Naive thymus-derived CD4-positive, alpha-beta T cell (primary cell): ENCODE measurements at regions of chr6 and their contacts with region 1.

Region 1: DNA sequence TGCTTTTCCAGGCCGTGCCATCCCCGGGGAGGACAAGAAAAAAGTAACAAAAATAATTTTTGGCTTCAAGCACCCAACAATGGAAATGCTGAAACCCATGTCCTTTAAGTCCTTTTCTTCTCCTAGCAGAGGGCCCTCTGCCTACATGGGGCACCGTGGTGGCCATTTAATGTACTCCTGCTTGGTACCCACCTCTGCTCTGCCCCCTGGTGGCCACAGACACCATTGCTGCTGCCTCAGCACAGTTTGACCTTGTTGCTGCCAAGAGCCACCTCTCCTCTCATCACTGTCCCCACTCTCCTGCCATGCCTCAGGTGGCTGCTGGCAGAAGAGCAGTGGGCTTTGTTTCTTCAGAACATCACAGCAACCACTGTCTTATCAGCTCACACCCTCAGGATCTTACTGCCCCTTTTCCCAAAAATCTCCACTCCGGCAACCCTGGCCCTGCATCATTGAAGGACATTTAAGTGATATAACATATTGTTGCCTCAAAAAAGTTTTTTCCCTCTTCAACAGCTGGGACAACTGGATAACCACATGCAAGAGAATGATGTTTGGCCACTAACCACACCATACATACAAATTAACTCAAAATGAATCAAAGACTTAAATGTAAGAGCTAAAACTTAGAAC is 12.9 kb upstream of the ARMC2 start:
- DNase-seq: peak; percentile 65 to 82 (median 76)
- ATAC-seq: peak; percentile 98
- H3K4me3 ChIP-seq: no peak overlapping the region
- H3K4me3 Mint-ChIP-seq: no peak overlapping the region
- H3K27ac ChIP-seq: no peak overlapping the region
- H3K27ac Mint-ChIP-seq: peak overlapping the region in 6 of 9 donors; percentile 27 to 52 (median 48)
- H3K4me1 ChIP-seq: peaks cover 9 to 18% of the 10 kb centered on the region in 2 donors
- H3K4me1 Mint-ChIP-seq: peaks cover 14 to 30% (median 22%) of the 10 kb centered on the region in 7 donors
- H3K27me3 ChIP-seq: no peaks in the 10 kb centered on the region
- H3K27me3 Mint-ChIP-seq: peaks cover 0 to 44% (median 0%) of the 10 kb centered on the region in 5 donors

Region 2: DNA sequence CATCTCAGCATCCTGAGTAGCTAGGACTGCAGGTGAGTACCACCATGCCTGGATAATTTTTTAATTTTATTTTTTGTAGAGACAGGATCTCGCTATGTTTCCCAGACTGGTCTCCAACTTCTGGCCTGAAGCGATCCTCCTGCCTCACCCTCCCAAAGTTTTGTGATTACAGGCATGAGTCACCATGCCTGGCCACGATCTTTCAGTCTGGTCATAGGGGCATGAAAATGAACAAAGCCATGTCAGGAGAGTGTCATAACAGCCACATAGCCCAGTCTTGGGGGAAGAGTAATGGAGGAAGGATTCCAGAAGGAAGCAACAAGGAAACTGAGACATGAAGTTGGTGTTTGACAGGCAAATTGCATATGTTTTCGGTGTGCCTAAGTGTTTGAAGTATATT is 557.5 kb before region 1 on chr6:
- CTCF ChIA-PET with region 1: no interaction called
- POLR2A ChIA-PET with region 1: no interaction called
- intact Hi-C with region 1: no loop called
- DNase-seq: no peak
- ATAC-seq: no peak
- H3K4me3 ChIP-seq: no peak overlapping the region
- H3K4me3 Mint-ChIP-seq: no peak overlapping the region
- H3K27ac ChIP-seq: no peak overlapping the region
- H3K27ac Mint-ChIP-seq: no peak overlapping the region
- H3K4me1 ChIP-seq: no peaks in the 10 kb centered on the region
- H3K4me1 Mint-ChIP-seq: no peaks in the 10 kb centered on the region
- H3K27me3 ChIP-seq: no peaks in the 10 kb centered on the region
- H3K27me3 Mint-ChIP-seq: peaks cover 0 to 31% (median 4%) of the 10 kb centered on the region in 5 donors

Region 3: DNA sequence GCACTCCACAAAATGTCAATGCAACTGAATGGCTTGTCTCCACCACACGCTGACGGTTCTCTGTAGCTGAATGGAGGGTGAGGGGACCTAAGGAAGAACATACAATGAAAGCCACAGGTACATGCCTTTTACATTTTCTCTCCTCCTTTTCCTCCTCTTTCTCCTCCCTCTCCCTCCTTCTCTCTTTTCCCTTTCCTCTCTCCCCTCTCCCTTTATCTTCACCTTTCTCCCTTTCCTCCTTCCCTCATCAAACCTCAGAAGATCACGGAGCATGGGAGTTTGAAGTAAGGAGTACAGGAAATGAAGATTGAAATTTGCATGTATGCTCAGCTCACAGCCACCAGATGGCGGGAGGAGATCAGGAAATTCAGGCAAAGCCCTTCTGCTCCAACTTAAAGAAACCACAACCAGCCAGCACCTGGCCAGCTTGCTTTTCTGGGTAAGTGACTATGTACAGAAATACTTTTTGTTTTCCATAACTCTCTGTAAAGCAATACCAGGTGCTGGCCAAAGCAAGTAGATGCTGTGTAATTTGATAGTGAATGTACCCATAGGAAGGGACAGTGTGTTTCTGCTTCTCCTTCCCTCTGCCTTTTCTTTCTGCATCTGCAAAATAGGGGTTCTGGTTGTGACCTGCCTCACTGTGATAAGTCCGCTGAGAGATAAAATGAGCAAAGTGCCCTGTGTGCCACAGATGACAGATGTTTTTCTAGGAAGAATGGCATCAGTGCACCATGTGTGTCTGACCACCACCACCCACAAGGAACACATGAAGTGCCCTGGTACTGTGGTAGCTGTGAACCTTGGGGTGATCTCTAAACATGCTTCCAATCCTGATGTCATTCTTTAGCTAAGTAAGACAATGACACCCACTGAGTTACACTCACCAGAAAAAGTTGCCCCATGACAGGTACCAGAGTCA is 293.2 kb before region 1 on chr6:
- CTCF ChIA-PET with region 1: interaction called, 39 read pairs
- POLR2A ChIA-PET with region 1: no interaction called
- intact Hi-C with region 1: loop called (anchors 1 kb)
- DNase-seq: peak in 8 of 9 donors; percentile 41 to 77 (median 70)
- ATAC-seq: peak; percentile 84
- H3K4me3 ChIP-seq: no peak overlapping the region
- H3K4me3 Mint-ChIP-seq: peak overlapping the region in 7 of 10 donors; percentile 2 to 67 (median 31)
- H3K27ac ChIP-seq: no peak overlapping the region
- H3K27ac Mint-ChIP-seq: peak overlapping the region in 1 of 9 donors; percentile 33
- H3K4me1 ChIP-seq: peaks cover 8 to 11% of the 10 kb centered on the region in 2 donors
- H3K4me1 Mint-ChIP-seq: peaks cover 7 to 18% (median 8%) of the 10 kb centered on the region in 7 donors
- H3K27me3 ChIP-seq: no peaks in the 10 kb centered on the region
- H3K27me3 Mint-ChIP-seq: peaks cover 0 to 52% (median 6%) of the 10 kb centered on the region in 5 donors

Region 4: DNA sequence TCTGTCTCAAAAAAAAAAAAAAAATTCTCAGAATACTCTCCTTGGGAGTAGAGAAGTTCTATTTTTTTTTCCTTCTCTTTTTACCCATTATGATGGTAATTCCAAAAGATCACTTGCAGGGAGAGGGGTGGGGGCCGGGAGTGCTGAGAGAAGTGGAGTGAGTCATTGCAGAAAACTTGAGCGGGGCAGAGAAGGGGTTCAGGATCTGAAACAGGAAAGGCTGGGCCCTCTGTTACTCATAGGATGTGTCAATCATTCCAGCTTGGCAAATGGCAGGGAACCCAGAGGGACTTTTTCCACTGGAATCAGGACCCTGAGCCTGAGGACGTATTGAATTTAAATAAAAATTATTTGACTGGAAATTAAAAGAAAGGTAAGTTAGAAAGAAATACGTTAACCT is 98.5 kb before region 1 on chr6:
- CTCF ChIA-PET with region 1: no interaction called
- POLR2A ChIA-PET with region 1: no interaction called
- intact Hi-C with region 1: no loop called
- DNase-seq: no peak
- ATAC-seq: peak; percentile 41
- H3K4me3 ChIP-seq: no peak overlapping the region
- H3K4me3 Mint-ChIP-seq: no peak overlapping the region
- H3K27ac ChIP-seq: no peak overlapping the region
- H3K27ac Mint-ChIP-seq: no peak overlapping the region
- H3K4me1 ChIP-seq: no peaks in the 10 kb centered on the region
- H3K4me1 Mint-ChIP-seq: peaks cover 0 to 3% (median 0%) of the 10 kb centered on the region in 7 donors
- H3K27me3 ChIP-seq: no peaks in the 10 kb centered on the region
- H3K27me3 Mint-ChIP-seq: peaks cover 0 to 13% (median 0%) of the 10 kb centered on the region in 5 donors

Region 5: GRCh38 chr6:108782179-108783041 is 52.9 kb before region 1 on chr6:
- CTCF ChIA-PET with region 1: interaction called, 3 read pairs
- POLR2A ChIA-PET with region 1: no interaction called
- intact Hi-C with region 1: loop called (anchors 1 to 2 kb)
- DNase-seq: peak; percentile 56 to 76 (median 71)
- ATAC-seq: peak; percentile 98
- H3K4me3 ChIP-seq: peak overlapping the region; percentile 52
- H3K4me3 Mint-ChIP-seq: peak overlapping the region; percentile 46 to 93 (median 87)
- H3K27ac ChIP-seq: no peak overlapping the region
- H3K27ac Mint-ChIP-seq: peak overlapping the region in 3 of 9 donors; percentile 47 to 64 (median 51)
- H3K4me1 ChIP-seq: no peaks in the 10 kb centered on the region
- H3K4me1 Mint-ChIP-seq: peaks cover 0 to 17% (median 10%) of the 10 kb centered on the region in 7 donors
- H3K27me3 ChIP-seq: no peaks in the 10 kb centered on the region
- H3K27me3 Mint-ChIP-seq: peaks cover 0 to 73% (median 5%) of the 10 kb centered on the region in 5 donors

Region 6: GRCh38 chr6:108798670-108799353 is 36.5 kb before region 1 on chr6:
- CTCF ChIA-PET with region 1: no interaction called
- POLR2A ChIA-PET with region 1: no interaction called
- intact Hi-C with region 1: loop called in 1 of 2 experiments (anchors 1 kb)
- DNase-seq: peak; percentile 17 to 63 (median 56)
- ATAC-seq: peak; percentile 92
- H3K4me3 ChIP-seq: no peak overlapping the region
- H3K4me3 Mint-ChIP-seq: peak overlapping the region; percentile 61 to 86 (median 78)
- H3K27ac ChIP-seq: no peak overlapping the region
- H3K27ac Mint-ChIP-seq: peak overlapping the region; percentile 68 to 94 (median 84)
- H3K4me1 ChIP-seq: peaks cover 16 to 31% of the 10 kb centered on the region in 2 donors
- H3K4me1 Mint-ChIP-seq: peaks cover 20 to 36% (median 22%) of the 10 kb centered on the region in 7 donors
- H3K27me3 ChIP-seq: no peaks in the 10 kb centered on the region
- H3K27me3 Mint-ChIP-seq: peaks cover 0 to 7% (median 0%) of the 10 kb centered on the region in 5 donors

Region 7: DNA sequence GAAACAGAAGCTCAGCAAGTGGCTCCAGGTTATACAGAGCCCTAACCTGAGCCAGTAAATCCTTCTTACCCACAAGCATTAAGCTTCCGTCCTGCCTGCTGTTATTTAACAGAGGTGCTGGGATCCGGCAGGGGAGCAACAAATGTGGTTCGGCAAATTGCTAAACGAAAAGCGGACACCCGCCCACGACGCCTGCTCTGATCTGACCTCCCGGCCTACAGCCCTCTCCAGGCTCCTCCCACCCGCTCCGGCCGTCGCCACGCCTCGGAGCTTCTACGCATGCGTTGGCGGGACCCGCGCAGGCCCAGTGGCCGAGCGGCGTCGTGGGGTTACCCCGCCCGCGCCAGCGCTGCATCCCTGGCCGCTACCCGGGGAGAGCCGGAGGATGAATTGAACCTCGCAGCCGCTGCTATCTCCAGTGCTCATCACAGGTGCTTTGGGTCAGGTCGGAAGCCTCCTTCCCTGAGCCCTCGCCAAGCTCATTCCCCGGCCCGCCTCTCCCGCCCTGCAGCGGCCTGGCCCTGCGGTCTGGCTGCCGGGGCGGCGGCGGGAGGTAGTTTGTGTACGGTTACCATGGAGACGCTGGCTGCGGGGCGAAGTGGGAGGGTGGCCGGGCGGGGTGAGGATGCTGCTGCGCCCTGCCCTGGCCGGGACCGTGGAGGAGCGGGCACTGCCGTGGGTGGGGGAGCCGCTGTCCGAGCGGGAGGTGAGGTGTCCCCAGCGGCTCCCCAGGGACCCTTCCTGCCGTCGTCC is 13.0 kb after region 1 on chr6 and contains the start of gene ARMC2:
- CTCF ChIA-PET with region 1: interaction called, 3 read pairs
- POLR2A ChIA-PET with region 1: interaction called, 4 read pairs
- intact Hi-C with region 1: loop called in 1 of 2 experiments (anchors 1 kb)
- DNase-seq: peak; percentile 72 to 95 (median 79)
- ATAC-seq: peak; percentile 94
- H3K4me3 ChIP-seq: peak within 1 kb of the TSS; percentile 90
- H3K4me3 Mint-ChIP-seq: peak within 1 kb of the TSS; percentile 75 to 93 (median 88)
- H3K27ac ChIP-seq: peak within 1 kb of the TSS; percentile 69
- H3K27ac Mint-ChIP-seq: peak within 1 kb of the TSS; percentile 72 to 93 (median 85)
- H3K4me1 ChIP-seq: peaks cover 6 to 13% of the 10 kb centered on the region in 2 donors
- H3K4me1 Mint-ChIP-seq: peaks cover 11 to 39% (median 29%) of the 10 kb centered on the region in 7 donors
- H3K27me3 ChIP-seq: no peaks in the 10 kb centered on the region
- H3K27me3 Mint-ChIP-seq: peaks cover 0 to 36% (median 0%) of the 10 kb centered on the region in 5 donors
- total RNA-seq, gene ARMC2: 6.2 to 12.7 (median 7.9) TPM

Region 8: GRCh38 chr6:108874470-108875160 is 39.3 kb after region 1 on chr6:
- CTCF ChIA-PET with region 1: no interaction called
- POLR2A ChIA-PET with region 1: no interaction called
- intact Hi-C with region 1: loop called in 1 of 2 experiments (anchors 5 kb)
- DNase-seq: peak in 1 of 9 donors; percentile 66
- ATAC-seq: peak; percentile 79
- H3K4me3 ChIP-seq: no peak overlapping the region
- H3K4me3 Mint-ChIP-seq: peak overlapping the region in 8 of 10 donors; percentile 25 to 79 (median 43)
- H3K27ac ChIP-seq: peak overlapping the region; percentile 22
- H3K27ac Mint-ChIP-seq: peak overlapping the region in 7 of 9 donors; percentile 6 to 92 (median 53)
- H3K4me1 ChIP-seq: peaks cover 9 to 41% of the 10 kb centered on the region in 2 donors
- H3K4me1 Mint-ChIP-seq: peaks cover 25 to 63% (median 31%) of the 10 kb centered on the region in 7 donors
- H3K27me3 ChIP-seq: no peaks in the 10 kb centered on the region
- H3K27me3 Mint-ChIP-seq: peaks cover 0 to 29% (median 0%) of the 10 kb centered on the region in 5 donors